ENCODE measurements at regions of chr3 and their contacts with region 1.

Region 1: GRCh38 chr3:127544192-127544802 is 46.2 kb downstream of the TPRA1 start:
- DNase-seq: peak in 8 of 10 donors; percentile 63 to 94 (median 76)

Region 2: GRCh38 chr3:126679318-126679751 is 865.0 kb before region 1 on chr3:
- intact Hi-C with region 1: loop called (anchors 5 kb)
- DNase-seq: peak; percentile 76 to 98 (median 88)